ENCODE measurements at regions of chr18 and their contacts with region 1.

Region 1: DNA sequence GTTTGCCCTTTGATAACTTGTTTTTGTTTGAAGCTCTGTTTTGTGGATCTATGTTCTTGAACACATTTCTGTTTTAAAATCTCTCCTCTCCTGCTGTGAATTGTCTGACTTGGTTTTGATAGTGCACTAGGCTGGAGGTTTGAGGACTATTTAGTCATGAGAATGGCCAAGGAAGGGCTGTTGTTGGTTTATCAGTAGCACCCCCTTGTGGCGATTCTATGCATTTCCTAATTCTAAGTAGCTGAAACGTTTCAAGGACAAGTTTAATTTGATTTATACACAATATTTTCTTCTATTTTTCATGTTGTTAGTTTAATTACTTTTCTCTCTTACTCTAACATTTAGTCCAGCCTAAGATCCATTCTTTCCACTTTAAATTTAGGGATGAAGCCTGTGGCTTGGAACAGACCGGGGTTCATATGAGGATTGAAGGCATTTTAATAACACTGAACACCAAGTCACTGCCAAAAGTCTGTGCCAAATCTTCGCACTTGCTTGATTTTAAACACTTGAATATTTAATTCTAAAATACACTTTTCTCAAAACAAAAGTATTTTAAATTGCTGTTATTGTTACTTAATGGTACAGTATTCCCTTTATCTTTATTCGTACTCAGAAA is 166.0 kb downstream of the SOCS6 start:
- DNase-seq: peak; percentile 38 to 76
- ATAC-seq: peak; percentile 71 to 85
- H3K4me3 ChIP-seq: no peak overlapping the region
- H3K27ac ChIP-seq: peak overlapping the region; percentile 50 to 74
- H3K4me1 ChIP-seq: peaks cover 19% of the 10 kb centered on the region
- CTCF ChIP-seq: peak; percentile 85
- EP300 ChIP-seq: no peak
- POLR2A ChIP-seq: no peak
- RAD21 ChIP-seq: peak; percentile 83 to 87

Region 2: GRCh38 chr18:70172225-70172624 is 282.6 kb before region 1 on chr18:
- CTCF ChIA-PET with region 1: interaction called, 28 read pairs
- POLR2A ChIA-PET with region 1: no interaction called
- DNase-seq: peak in 1 of 2 experiments; percentile 28
- ATAC-seq: no peak
- H3K4me3 ChIP-seq: no peak overlapping the region
- H3K27ac ChIP-seq: peak overlapping the region; percentile 58 to 78; a peak in 3 of 6 replicates
- H3K4me1 ChIP-seq: peaks cover 62% of the 10 kb centered on the region
- CTCF ChIP-seq: peak; percentile 55
- EP300 ChIP-seq: no peak
- POLR2A ChIP-seq: no peak
- RAD21 ChIP-seq: peak; percentile 63 to 75

Region 3: GRCh38 chr18:70182548-70182947 is 272.3 kb before region 1 on chr18:
- CTCF ChIA-PET with region 1: interaction called, 11 read pairs
- POLR2A ChIA-PET with region 1: no interaction called
- DNase-seq: no peak
- ATAC-seq: no peak
- H3K4me3 ChIP-seq: no peak overlapping the region
- H3K27ac ChIP-seq: peak overlapping the region; percentile 81 to 88
- H3K4me1 ChIP-seq: peaks cover 61% of the 10 kb centered on the region
- CTCF ChIP-seq: no peak
- EP300 ChIP-seq: no peak
- POLR2A ChIP-seq: no peak
- RAD21 ChIP-seq: no peak

Measured in A549 (cell line).